ENCODE measurements at regions of chr22 and their contacts with region 1.

Region 1: GRCh38 chr22:24768537-24769374 is 5.8 kb downstream of the PIWIL3 start:
- DNase-seq: peak; percentile 69 to 76
- H3K4me3 ChIP-seq: no peak overlapping the region
- H3K4me3 Mint-ChIP-seq: no peak overlapping the region
- H3K27ac Mint-ChIP-seq: no peak overlapping the region
- H3K4me1 ChIP-seq: peaks cover 14% of the 10 kb centered on the region
- H3K4me1 Mint-ChIP-seq: peaks cover 13% of the 10 kb centered on the region
- H3K27me3 ChIP-seq: no peaks in the 10 kb centered on the region
- H3K27me3 Mint-ChIP-seq: no peaks in the 10 kb centered on the region
- CTCF ChIP-seq: peak; percentile 79 to 80

Region 2: DNA sequence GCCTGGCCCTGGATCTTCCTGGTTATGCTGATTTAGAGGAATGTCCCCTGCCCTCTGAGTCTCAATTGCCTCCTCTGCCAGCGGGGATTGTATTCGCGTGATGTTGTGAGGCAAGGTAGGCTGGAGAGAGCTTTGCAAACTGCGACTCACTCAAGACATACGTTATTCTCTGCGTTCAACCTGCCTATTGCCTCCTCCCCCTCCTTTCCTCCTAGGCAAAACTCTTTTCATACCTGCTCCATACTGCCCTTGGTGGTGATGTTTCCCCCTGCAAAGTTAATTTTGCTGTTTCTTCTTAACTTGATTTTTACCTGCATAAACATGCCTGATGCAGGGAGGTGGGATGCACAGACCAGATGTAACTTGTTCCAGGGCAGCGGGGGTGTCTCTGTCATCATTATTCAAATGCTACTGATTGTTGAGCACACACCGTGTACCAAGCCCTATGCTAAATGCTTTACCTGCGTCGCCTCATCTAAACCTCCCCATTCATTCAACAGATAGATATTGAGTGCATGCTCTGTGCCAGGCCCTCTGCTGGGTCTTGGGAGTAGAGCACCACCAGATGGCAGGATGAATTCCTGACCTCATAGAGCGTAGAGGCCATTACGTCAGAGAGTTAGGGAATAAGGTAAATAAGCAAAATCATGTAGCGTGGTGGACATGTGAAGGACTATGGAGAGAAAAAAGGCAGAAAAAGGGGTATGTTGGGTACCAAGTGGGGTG is 66.3 kb after region 1 on chr22:
- CTCF ChIA-PET with region 1: interaction called, 4 read pairs
- POLR2A ChIA-PET with region 1: no interaction called
- intact Hi-C with region 1: loop called (anchors 1 kb)
- DNase-seq: peak in 1 of 2 experiments; percentile 52
- H3K4me3 ChIP-seq: no peak overlapping the region
- H3K4me3 Mint-ChIP-seq: no peak overlapping the region
- H3K27ac Mint-ChIP-seq: peak overlapping the region; percentile 2
- H3K4me1 ChIP-seq: no peaks in the 10 kb centered on the region
- H3K4me1 Mint-ChIP-seq: peaks cover 18% of the 10 kb centered on the region
- H3K27me3 ChIP-seq: no peaks in the 10 kb centered on the region
- H3K27me3 Mint-ChIP-seq: no peaks in the 10 kb centered on the region
- CTCF ChIP-seq: peak; percentile 38 to 57

Region 3: GRCh38 chr22:24845041-24845898 is 76.5 kb after region 1 on chr22:
- CTCF ChIA-PET with region 1: interaction called, 28 read pairs
- POLR2A ChIA-PET with region 1: no interaction called
- intact Hi-C with region 1: loop called (anchors 1 kb)
- DNase-seq: no peak
- H3K4me3 ChIP-seq: no peak overlapping the region
- H3K4me3 Mint-ChIP-seq: no peak overlapping the region
- H3K27ac Mint-ChIP-seq: no peak overlapping the region
- H3K4me1 ChIP-seq: no peaks in the 10 kb centered on the region
- H3K4me1 Mint-ChIP-seq: peaks cover 4% of the 10 kb centered on the region
- H3K27me3 ChIP-seq: no peaks in the 10 kb centered on the region
- H3K27me3 Mint-ChIP-seq: no peaks in the 10 kb centered on the region
- CTCF ChIP-seq: no peak

Region 4: DNA sequence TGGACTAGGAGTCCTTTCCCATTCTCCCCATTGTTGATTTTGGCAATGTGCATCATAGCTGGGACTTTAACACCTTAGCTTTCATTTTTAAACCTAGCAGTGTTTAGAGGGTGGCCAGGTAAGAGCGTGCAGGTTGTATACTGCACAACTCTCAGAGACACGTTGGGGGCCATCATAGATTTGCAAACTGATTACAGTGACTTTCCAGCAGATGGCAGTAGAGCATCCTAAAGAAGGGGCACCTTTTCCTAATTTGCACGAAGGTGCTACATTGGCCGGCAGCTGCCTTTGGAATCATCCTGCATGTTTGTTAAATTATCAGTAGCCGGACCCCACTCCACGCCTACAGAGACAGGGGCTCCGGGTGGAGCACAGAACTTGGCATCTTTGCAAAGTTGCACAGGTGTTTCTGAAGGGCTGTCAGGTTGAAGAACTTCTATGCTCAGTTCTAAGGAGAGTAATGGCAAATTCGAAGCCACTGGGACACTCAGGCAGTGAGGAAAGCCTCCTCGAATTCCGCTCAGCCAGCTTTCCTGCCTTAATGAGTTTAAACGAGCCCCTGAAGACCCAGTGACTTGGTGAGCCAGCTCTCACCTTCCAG is 170.1 kb after region 1 on chr22:
- CTCF ChIA-PET with region 1: no interaction called
- POLR2A ChIA-PET with region 1: no interaction called
- intact Hi-C with region 1: loop called (anchors 5 kb)
- DNase-seq: peak in 1 of 2 experiments; percentile 71
- H3K4me3 ChIP-seq: no peak overlapping the region
- H3K4me3 Mint-ChIP-seq: no peak overlapping the region
- H3K27ac Mint-ChIP-seq: no peak overlapping the region
- H3K4me1 ChIP-seq: peaks cover 5% of the 10 kb centered on the region; the same call in 1 of the 2 replicates
- H3K4me1 Mint-ChIP-seq: peaks cover 1% of the 10 kb centered on the region
- H3K27me3 ChIP-seq: no peaks in the 10 kb centered on the region
- H3K27me3 Mint-ChIP-seq: no peaks in the 10 kb centered on the region
- CTCF ChIP-seq: peak; percentile 74 to 76

Region 5: DNA sequence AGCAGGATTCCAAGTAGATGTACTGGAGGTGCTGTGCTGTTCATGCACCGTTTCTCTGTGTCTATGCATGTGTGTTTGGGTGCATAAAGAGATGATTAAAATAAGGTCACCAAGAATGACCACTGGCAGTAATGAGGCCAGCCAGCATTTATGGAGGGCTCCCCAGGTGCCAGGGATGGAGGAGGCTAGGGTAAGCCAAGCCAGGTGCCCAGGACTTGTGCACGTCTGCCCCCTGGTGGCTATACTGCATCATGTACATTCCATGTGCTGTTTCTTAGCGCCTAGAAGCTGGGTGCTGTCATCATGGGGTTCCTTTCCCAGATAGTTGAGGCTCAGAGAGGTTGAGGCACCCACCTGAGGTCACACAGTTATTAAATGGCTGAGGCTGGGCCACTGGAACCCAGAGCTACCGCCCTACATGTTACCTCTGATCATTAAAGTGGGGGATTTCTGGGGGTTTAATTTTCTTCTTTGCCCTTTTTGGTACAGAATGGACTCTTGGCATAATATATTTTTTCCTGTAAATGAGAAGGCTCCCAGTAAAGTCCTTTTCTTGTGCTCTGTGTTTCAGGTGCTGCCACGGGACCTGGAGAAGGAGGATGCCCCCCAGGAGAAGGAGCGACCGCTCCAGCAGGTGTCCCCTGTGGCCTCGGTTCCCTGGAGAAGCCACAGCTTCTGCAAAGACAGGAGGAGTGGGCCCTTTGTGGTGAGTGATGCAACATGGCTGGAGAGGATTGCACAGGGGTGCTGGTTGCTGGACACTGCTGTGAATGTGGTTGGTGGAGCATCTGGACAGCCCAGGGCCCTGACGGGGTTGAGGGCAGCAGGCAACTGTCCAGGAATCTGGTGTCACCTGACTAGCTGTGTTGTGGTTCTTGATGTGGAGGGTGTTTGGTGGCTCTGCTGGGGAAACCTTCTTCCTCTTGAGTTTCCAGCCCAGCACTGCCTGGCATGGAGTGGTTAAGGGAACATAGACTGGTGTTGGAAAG is 280.2 kb after region 1 on chr22:
- CTCF ChIA-PET with region 1: interaction called, 4 read pairs
- POLR2A ChIA-PET with region 1: no interaction called
- intact Hi-C with region 1: loop called (anchors 2 kb)
- DNase-seq: peak; percentile 63 to 72
- H3K4me3 ChIP-seq: no peak overlapping the region
- H3K4me3 Mint-ChIP-seq: no peak overlapping the region
- H3K27ac Mint-ChIP-seq: no peak overlapping the region
- H3K4me1 ChIP-seq: peaks cover 24% of the 10 kb centered on the region
- H3K4me1 Mint-ChIP-seq: peaks cover 10% of the 10 kb centered on the region
- H3K27me3 ChIP-seq: no peaks in the 10 kb centered on the region
- H3K27me3 Mint-ChIP-seq: no peaks in the 10 kb centered on the region
- CTCF ChIP-seq: peak; percentile 82 to 88